ENCODE measurements at regions of chr2 and their contacts with region 1.

Region 1: GRCh38 chr2:203934041-203934492 is 2.5 kb upstream of the ICOS start:
- DNase-seq: peak; percentile 86
- H3K4me3 Mint-ChIP-seq: peak overlapping the region; percentile 79
- H3K27ac Mint-ChIP-seq: peak overlapping the region; percentile 92
- H3K4me1 Mint-ChIP-seq: peaks cover 37% of the 10 kb centered on the region
- H3K27me3 Mint-ChIP-seq: no peaks in the 10 kb centered on the region

Region 2: DNA sequence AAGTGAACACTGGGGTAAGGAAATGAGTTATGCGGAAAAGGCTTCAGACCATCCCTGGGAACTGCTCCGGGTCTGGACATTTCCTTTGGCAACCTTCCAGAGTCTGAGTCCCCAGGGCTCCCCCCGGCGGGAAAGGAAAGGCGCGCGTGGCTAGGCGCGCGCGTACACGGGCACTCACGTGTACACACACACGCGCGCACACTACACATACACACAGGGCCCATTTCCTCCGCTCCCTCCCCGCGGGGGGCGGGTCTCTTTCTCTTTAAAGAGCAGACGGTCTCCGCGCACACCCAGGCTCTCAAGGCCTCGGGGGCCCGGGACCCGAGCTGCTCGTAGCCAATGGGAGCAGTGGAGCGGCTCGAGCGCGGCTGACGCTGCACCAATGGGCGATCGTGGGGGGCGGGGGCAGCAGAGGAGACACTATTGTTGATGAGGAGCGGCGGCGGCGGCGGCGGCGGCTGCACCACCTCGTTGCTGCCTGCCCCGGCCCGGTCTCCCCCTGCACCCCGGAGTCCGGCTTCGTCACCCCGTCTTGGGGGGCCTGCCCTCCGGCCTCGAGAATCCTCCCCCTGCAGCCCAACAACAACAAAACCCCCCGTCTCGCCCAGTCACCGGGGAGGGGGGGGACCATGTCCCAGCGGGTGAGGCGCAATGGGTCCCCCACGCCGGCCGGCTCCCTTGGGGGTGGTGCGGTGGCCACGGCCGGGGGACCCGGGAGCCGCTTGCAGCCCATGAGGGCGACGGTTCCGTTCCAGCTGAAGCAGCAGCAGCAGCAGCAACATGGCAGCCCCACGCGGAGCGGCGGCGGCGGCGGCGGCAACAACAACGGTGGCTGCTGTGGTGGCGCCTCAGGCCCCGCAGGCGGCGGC is 1299.3 kb before region 1 on chr2 and contains the start of gene FAM117B:
- intact Hi-C with region 1: loop called (anchors 10 kb)
- DNase-seq: peak; percentile 99
- H3K4me3 Mint-ChIP-seq: peak within 1 kb of the TSS; percentile 98
- H3K27ac Mint-ChIP-seq: peak within 1 kb of the TSS; percentile 97
- H3K4me1 Mint-ChIP-seq: peaks cover 35% of the 10 kb centered on the region
- H3K27me3 Mint-ChIP-seq: no peaks in the 10 kb centered on the region
- total RNA-seq, gene FAM117B: 14.5 TPM in 2 replicates

Region 3: GRCh38 chr2:203730076-203730729 is 203.9 kb before region 1 on chr2:
- intact Hi-C with region 1: loop called (anchors 10 kb)
- DNase-seq: peak; percentile 71
- H3K4me3 Mint-ChIP-seq: peak overlapping the region; percentile 71
- H3K27ac Mint-ChIP-seq: peak overlapping the region; percentile 96
- H3K4me1 Mint-ChIP-seq: peaks cover 79% of the 10 kb centered on the region
- H3K27me3 Mint-ChIP-seq: no peaks in the 10 kb centered on the region

Region 4: DNA sequence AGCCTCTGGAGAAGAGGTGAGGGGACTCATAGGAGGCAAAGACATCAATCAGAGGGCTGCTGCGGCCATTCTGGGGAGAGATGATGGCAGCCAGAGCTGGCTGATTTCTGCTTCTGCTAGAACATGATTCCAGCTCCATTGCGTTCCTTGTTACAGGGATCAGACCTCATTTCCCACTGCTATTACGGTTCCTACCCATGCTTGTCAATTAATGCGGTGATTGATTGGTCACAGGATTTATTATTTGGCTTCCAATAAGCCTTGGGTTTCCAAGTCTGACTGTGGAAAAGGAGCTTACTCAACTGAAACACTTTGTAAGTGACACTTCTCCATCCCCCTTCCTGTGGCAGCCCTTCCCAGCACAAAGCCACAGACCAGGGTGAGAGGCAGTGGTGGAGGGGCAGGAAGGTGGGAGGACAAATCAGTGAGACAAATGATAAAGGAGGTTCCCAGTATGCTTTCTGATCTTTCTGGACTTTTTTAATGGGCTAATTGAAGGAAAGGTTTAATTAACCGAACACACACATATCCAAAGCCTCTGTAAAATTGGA is 93.3 kb before region 1 on chr2:
- intact Hi-C with region 1: no loop called
- DNase-seq: no peak
- H3K4me3 Mint-ChIP-seq: no peak overlapping the region
- H3K27ac Mint-ChIP-seq: no peak overlapping the region
- H3K4me1 Mint-ChIP-seq: peaks cover 27% of the 10 kb centered on the region
- H3K27me3 Mint-ChIP-seq: no peaks in the 10 kb centered on the region

Region 5: DNA sequence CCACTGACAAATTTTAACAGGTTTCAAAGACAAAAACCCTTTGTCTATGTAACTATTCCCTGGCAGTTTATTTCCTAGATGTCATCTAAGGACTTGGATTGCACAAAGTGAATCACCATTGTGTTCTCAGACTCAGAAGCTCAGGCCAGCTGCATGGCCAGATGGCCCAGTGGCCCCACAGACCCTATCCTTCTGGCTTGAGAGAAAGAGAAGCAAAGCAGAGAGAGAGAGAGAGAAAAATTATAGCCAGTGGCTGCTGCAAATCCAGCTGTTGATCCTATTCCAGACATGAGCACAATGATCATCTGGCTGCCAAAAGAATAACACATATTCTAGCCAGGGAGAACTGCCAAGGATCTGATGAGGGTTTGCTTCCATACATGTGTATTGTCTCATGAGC is 40.7 kb before region 1 on chr2:
- intact Hi-C with region 1: loop called (anchors 1 kb)
- DNase-seq: no peak
- H3K4me3 Mint-ChIP-seq: peak overlapping the region; percentile 21
- H3K27ac Mint-ChIP-seq: peak overlapping the region; percentile 62
- H3K4me1 Mint-ChIP-seq: peaks cover 65% of the 10 kb centered on the region
- H3K27me3 Mint-ChIP-seq: no peaks in the 10 kb centered on the region

Region 6: DNA sequence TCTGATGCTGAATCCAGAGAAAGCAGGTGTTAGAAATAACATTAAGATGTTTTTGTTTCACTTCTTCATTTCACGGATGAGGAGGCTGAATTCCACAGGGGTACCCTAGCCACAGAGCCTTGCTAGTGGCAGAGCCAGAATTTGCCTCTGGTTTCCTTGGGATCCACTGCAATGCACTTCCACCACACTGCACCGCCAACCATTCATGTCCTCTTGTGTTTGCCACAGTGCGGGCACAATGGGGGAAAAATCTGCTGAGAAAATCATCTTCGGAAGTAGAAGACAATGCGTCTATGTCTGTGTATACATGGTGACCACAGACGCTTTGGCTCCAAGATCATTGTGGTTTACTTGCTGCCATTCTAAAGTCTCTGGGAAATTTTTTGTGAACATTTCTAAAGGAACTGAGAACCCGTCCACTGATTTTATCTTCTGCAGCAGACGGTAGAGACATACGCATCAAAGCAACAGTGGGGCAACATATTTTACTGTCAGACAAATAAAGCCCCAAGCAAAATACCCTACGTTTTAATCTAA is 17.4 kb after region 1 on chr2:
- intact Hi-C with region 1: loop called (anchors 2 kb)
- DNase-seq: peak; percentile 84
- H3K4me3 Mint-ChIP-seq: peak overlapping the region; percentile 69
- H3K27ac Mint-ChIP-seq: peak overlapping the region; percentile 84
- H3K4me1 Mint-ChIP-seq: peaks cover 70% of the 10 kb centered on the region
- H3K27me3 Mint-ChIP-seq: no peaks in the 10 kb centered on the region

Region 7: GRCh38 chr2:203997980-203998809 is 64.1 kb after region 1 on chr2:
- intact Hi-C with region 1: loop called (anchors 1 kb)
- DNase-seq: peak; percentile 57
- H3K4me3 Mint-ChIP-seq: peak overlapping the region; percentile 55
- H3K27ac Mint-ChIP-seq: peak overlapping the region; percentile 69
- H3K4me1 Mint-ChIP-seq: peaks cover 72% of the 10 kb centered on the region
- H3K27me3 Mint-ChIP-seq: no peaks in the 10 kb centered on the region

Region 8: DNA sequence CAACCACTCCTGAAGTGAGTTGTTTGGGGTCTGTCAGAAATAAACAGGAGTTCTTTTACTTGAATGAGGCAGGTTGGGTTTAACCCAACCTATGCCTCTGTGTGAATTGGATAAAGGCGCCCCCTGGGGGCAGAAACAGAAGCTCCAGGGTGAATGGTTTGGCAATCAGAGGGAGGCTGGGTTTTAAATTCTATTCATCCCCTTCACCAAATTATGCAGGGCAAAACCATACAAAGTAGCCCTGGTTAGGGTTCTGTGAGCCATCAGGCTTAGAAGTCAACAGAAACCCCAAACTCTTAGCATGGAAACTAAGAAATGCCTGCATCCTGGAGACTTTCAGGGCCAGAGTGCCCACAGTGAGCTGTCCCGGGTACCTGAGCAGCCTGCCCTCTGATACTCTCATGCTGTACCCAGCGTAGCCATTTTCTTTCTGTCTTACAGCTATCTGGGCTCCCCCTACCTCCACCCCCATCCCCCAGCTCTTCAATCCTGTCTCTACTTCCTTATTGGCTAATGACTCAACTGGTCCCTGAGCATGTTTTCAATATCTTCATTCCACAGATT is 244.0 kb after region 1 on chr2:
- intact Hi-C with region 1: loop called (anchors 5 kb)
- DNase-seq: peak; percentile 90
- H3K4me3 Mint-ChIP-seq: no peak overlapping the region
- H3K27ac Mint-ChIP-seq: no peak overlapping the region
- H3K4me1 Mint-ChIP-seq: peaks cover 7% of the 10 kb centered on the region
- H3K27me3 Mint-ChIP-seq: peaks cover 32% of the 10 kb centered on the region